Posterior vena cava (tissue), 2 donors: ENCODE measurements at regions of chr2 and their contacts with region 1.

Region 1: GRCh38 chr2:10832203-10832936 is 19.8 kb upstream of the PDIA6 start:
- DNase-seq: peak; percentile 93

Region 2: DNA sequence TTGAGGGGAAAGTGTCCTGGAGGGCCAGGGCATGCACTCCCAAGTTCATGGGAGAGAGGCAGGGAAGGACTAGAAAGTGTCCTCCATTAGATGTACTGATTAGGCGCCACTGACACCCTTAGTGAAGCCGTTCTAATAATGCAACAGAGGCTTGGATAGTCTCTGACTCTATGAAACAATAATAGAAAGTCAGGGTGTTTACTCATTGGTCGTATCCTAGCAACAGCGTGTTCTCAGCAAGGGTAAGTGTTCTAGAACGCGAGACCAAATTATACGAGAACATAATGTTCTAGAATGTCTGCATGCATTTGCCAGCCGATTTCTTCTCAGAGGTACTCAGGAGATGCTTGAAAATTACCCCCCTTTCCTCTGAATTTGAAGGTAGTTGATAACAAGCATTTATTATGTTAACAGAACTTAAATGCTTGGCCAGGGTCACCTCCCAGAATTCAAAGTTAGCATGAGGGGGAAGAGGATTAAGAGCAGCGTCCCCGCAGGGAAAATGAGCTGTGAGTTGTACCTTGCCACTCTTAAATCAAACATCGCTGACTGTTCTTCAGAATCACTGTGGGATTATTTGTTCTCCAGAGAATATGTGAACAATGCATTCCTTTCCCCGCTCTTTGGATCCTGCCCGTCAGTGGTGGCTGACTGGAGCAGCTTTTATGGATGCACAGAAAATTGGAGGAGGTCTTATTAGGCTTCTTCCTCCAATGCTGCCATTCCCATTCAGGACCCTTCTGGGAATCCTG is 13.9 kb after region 1 on chr2:
- intact Hi-C with region 1: no loop called
- DNase-seq: peak; percentile 11

Region 3: GRCh38 chr2:10864861-10865636 is 32.7 kb after region 1 on chr2:
- intact Hi-C with region 1: no loop called
- DNase-seq: no peak

Region 4: DNA sequence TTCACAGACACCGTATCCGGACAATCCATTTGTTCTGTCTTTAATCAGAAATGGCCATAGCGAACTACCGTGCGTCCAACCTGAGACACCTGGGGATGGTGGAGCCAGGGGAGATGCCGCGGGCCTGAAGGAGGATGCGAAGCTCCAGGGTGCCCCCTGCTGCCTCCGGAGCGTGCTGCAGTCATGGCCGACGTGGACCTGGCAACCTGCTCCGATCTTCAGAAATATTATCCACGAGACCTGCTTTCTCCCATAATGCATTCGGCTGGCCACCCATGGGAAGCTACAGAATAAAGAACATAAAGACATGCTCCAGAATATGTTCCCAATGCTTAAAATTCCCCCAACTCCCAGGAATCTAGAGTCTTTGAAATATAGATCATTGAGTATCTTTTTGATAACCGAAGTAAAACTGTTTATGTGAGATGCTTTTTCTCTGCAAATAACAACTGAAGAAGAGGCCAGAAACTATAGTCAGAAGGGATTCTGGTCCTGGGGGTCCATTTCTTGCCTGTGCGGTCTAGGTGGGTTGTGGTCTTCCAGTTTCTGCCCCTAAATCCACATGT is 292.2 kb after region 1 on chr2:
- intact Hi-C with region 1: loop called (anchors 2 to 10 kb)
- DNase-seq: peak; percentile 82

Region 5: GRCh38 chr2:11129598-11130449 is 297.5 kb after region 1 on chr2:
- intact Hi-C with region 1: loop called (anchors 2 to 10 kb)
- DNase-seq: peak; percentile 79

Region 6: GRCh38 chr2:11583840-11584524 is 751.6 kb after region 1 on chr2:
- intact Hi-C with region 1: loop called in 1 of 2 experiments (anchors 5 kb)
- DNase-seq: peak; percentile 90